ENCODE measurements at regions of chr4 and their contacts with region 1.

Region 1: GRCh38 chr4:17614416-17615299 is at the start of gene MED28:
- DNase-seq: peak; percentile 94
- ATAC-seq: peak; percentile 89
- H3K4me3 Mint-ChIP-seq: peak within 1 kb of the TSS; percentile 96
- H3K27ac Mint-ChIP-seq: peak within 1 kb of the TSS; percentile 94
- H3K4me1 Mint-ChIP-seq: peaks cover 37% of the 10 kb centered on the region
- H3K27me3 Mint-ChIP-seq: no peaks in the 10 kb centered on the region
- total RNA-seq, gene MED28: 62.2 to 65.8 TPM

Region 2: DNA sequence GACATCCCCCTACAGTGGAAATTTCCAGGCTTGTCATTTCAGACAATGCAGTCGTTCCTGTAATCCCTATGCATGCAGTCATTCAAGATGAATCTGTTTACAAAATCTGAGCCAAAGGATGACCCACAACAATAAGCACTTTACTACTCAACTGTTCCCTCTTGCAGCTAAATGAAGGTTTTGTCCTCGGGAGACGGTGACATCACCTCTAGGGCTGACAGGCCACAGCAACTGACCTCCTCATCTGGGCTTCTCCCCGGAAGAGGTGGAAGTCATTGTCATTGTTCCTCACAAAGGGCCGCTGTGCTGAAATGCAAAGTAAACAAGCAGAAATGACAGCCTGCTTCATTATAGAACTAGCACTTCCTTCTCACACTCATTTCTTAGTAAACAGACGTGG is 70.5 kb before region 1 on chr4:
- POLR2A ChIA-PET with region 1: interaction called, 10 read pairs
- DNase-seq: no peak
- ATAC-seq: no peak
- H3K4me3 Mint-ChIP-seq: no peak overlapping the region
- H3K27ac Mint-ChIP-seq: no peak overlapping the region
- H3K4me1 Mint-ChIP-seq: peaks cover 2% of the 10 kb centered on the region
- H3K27me3 Mint-ChIP-seq: peaks cover 29% of the 10 kb centered on the region

Region 3: DNA sequence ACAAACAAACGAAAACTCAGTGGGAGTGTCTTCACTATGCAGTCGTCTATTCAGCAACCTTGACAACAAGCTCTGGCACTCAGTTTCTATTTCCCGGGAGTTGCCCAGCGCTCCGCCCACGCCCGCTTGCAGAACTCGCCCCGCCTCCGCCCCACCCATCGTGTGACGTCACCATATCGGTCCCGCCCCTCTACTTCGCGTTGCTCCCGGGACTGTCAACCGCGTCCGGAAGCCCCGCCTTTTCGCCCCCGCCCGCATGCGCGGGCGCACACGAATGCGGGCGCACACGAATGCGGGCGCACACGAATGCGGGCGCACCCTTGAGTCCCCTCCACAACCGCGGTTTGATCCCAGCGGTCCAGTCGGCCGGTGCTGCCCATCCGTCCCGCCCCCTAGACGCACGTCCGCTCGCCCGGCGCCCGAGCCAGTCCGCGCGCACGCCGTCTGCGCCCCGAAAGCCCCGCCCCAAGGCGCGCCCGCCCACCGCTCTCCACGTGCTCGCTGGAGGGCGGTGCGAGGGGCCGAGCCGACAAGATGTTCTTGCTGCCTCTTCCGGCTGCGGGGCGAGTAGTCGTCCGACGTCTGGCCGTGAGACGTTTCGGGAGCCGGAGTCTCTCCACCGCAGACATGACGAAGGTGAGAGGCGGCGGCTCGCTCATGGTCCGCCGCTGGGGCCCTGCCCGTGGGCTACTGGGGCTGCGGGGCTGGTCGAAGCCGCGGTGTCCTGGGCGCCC is 37.6 kb before region 1 on chr4 and contains the start of gene LAP3:
- POLR2A ChIA-PET with region 1: interaction called, 74 read pairs
- DNase-seq: peak; percentile 100
- ATAC-seq: peak; percentile 82
- H3K4me3 Mint-ChIP-seq: peak within 1 kb of the TSS; percentile 94
- H3K27ac Mint-ChIP-seq: peak within 1 kb of the TSS; percentile 99
- H3K4me1 Mint-ChIP-seq: peaks cover 34% of the 10 kb centered on the region
- H3K27me3 Mint-ChIP-seq: no peaks in the 10 kb centered on the region
- total RNA-seq, gene LAP3: 132 to 136 TPM

Region 4: DNA sequence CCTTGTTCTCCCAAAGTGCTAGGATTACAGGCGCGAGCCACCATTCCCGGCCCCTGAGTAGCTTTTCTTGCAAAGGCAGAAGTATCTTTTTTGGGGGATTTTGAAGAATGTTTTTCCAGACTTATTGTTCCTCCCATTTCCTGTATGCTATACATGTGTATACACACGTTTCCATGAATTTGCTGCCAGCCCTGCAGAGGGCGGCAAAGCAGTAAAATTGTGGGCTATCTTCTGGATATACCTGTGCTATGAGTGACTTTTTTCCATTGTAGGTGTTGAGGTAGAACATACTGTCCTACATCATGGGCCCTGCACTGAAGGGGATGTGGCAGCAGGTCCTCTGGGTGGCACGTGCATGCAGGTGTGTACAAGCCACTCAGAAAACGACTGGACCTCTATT is 17.1 kb before region 1 on chr4:
- POLR2A ChIA-PET with region 1: interaction called, 15 read pairs
- DNase-seq: no peak
- ATAC-seq: no peak
- H3K4me3 Mint-ChIP-seq: no peak overlapping the region
- H3K27ac Mint-ChIP-seq: no peak overlapping the region
- H3K4me1 Mint-ChIP-seq: peaks cover 4% of the 10 kb centered on the region
- H3K27me3 Mint-ChIP-seq: no peaks in the 10 kb centered on the region

Region 5: DNA sequence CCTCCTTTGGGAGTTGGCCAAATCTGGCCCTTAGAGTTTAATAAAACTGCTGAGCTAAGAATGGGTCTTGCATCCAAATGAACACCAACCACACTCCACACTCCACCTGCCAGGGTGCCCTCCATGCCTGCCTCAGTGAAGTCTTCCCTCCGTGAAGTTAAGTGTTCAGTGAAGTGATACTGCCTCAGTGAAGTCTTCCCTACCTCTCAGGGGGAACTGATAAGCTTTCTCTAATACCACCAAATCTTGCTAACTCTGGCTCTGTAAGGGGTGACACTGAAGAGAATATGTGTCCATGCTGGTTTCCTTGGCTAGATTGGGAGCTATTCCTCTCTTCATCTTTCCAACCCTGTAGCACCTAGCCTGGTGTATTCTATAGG is 27.7 kb after region 1 on chr4:
- POLR2A ChIA-PET with region 1: no interaction called
- DNase-seq: no peak
- ATAC-seq: no peak
- H3K4me3 Mint-ChIP-seq: no peak overlapping the region
- H3K27ac Mint-ChIP-seq: no peak overlapping the region
- H3K4me1 Mint-ChIP-seq: no peaks in the 10 kb centered on the region
- H3K27me3 Mint-ChIP-seq: no peaks in the 10 kb centered on the region

Region 6: DNA sequence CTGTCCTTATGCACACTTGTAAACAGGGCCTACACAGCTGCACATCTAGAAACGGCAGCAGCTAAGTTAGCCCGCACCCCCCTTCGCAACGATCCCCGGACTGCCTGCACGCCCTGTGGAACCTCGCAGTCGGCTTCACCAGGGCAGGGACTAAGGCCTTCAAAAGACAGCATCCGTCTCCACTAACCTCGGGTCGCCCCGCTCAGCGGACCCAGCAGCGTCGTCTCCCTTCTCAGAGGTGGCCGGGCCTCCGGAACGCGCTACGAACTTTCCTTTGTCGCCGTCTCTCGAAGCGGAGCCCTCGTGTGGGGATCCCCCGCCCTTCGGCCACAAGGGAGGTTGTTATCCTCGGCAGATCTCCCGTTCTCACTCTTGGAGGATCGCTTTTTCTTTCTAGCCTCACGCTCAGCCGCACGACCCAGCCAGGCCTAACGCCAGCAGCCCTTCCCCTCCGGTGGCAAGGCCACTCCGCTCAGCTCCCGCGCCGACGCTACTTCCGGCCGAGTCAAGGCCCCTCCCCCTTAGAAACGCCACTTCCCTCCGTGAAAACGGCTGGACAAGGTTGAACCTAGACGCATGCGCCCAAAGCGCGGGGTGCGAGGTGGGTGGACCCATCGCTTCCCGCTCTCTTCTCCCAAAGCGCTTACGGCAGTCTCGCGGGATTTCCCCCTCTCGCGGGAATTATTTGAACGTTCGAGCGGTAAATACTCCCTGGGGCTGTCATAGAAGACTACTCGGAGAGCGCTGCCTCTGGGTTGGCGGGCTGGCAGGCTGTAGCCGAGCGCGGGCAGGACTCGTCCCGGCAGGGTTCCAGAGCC is 195.8 kb after region 1 on chr4 and contains the starts of genes DCAF16 and NCAPG:
- POLR2A ChIA-PET with region 1: interaction called, 16 read pairs
- DNase-seq: peak; percentile 97
- ATAC-seq: peak; percentile 92
- H3K4me3 Mint-ChIP-seq: peak within 1 kb of the TSS; percentile 92
- H3K27ac Mint-ChIP-seq: peak within 1 kb of the TSS; percentile 99
- H3K4me1 Mint-ChIP-seq: peaks cover 36% of the 10 kb centered on the region
- H3K27me3 Mint-ChIP-seq: no peaks in the 10 kb centered on the region
- total RNA-seq, gene DCAF16: 54.5 to 60.6 TPM
- total RNA-seq, gene NCAPG: 59.1 to 66.6 TPM

Measured in activated naive CD8-positive, alpha-beta T cell treated with anti-CD3 and anti-CD28 coated beads, Interleukin-2, amount 10 ng/mL, durations not matched to agents 7 days and 5 days (primary cell).